ENCODE measurements at regions of chr18 and their contacts with region 1.

Region 1: GRCh38 chr18:78659748-78660147 is 319.9 kb upstream of the SALL3 start:
- DNase-seq: peak; percentile 51
- ATAC-seq: no peak
- H3K4me3 Mint-ChIP-seq: no peak overlapping the region
- H3K27ac Mint-ChIP-seq: no peak overlapping the region
- H3K4me1 Mint-ChIP-seq: no peaks in the 10 kb centered on the region
- H3K27me3 Mint-ChIP-seq: peaks cover 3% of the 10 kb centered on the region

Region 2: GRCh38 chr18:78587096-78587495 is 72.7 kb before region 1 on chr18:
- CTCF ChIA-PET with region 1: no interaction called
- POLR2A ChIA-PET with region 1: no interaction called
- intact Hi-C with region 1: no loop called
- DNase-seq: peak; percentile 11
- ATAC-seq: no peak
- H3K4me3 Mint-ChIP-seq: no peak overlapping the region
- H3K27ac Mint-ChIP-seq: no peak overlapping the region
- H3K4me1 Mint-ChIP-seq: no peaks in the 10 kb centered on the region
- H3K27me3 Mint-ChIP-seq: no peaks in the 10 kb centered on the region

Region 3: GRCh38 chr18:78643004-78643403 is 16.7 kb before region 1 on chr18:
- CTCF ChIA-PET with region 1: no interaction called
- POLR2A ChIA-PET with region 1: no interaction called
- intact Hi-C with region 1: no loop called
- DNase-seq: peak; percentile 16
- ATAC-seq: peak; percentile 31
- H3K4me3 Mint-ChIP-seq: no peak overlapping the region
- H3K27ac Mint-ChIP-seq: no peak overlapping the region
- H3K4me1 Mint-ChIP-seq: peaks cover 10% of the 10 kb centered on the region
- H3K27me3 Mint-ChIP-seq: peaks cover 3% of the 10 kb centered on the region

Region 4: GRCh38 chr18:78875268-78875997 is 215.7 kb after region 1 on chr18:
- CTCF ChIA-PET with region 1: no interaction called
- POLR2A ChIA-PET with region 1: no interaction called
- intact Hi-C with region 1: loop called in 1 of 2 experiments (anchors 5 kb)
- DNase-seq: peak; percentile 65
- ATAC-seq: peak; percentile 39
- H3K4me3 Mint-ChIP-seq: no peak overlapping the region
- H3K27ac Mint-ChIP-seq: no peak overlapping the region
- H3K4me1 Mint-ChIP-seq: no peaks in the 10 kb centered on the region
- H3K27me3 Mint-ChIP-seq: peaks cover 12% of the 10 kb centered on the region

Measured in activated CD4-positive, alpha-beta T cell treated with anti-CD3 and anti-CD28 coated beads for 36 hours (primary cell).